Natural killer cell (primary cell): ENCODE measurements at regions of chr3 and their contacts with region 1.

Region 1: GRCh38 chr3:101724329-101725193 is at the start of gene CEP97:
- DNase-seq: peak; percentile 79 to 91
- ATAC-seq: peak; percentile 96 to 100 (median 97)
- H3K4me3 ChIP-seq: peak within 1 kb of the TSS; percentile 82
- H3K4me3 Mint-ChIP-seq: peak within 1 kb of the TSS; percentile 98
- H3K27ac ChIP-seq: peak within 1 kb of the TSS; percentile 54
- H3K27ac Mint-ChIP-seq: peak within 1 kb of the TSS; percentile 90 to 95
- H3K4me1 ChIP-seq: peaks cover 12% of the 10 kb centered on the region
- H3K4me1 Mint-ChIP-seq: peaks cover 17 to 25% of the 10 kb centered on the region in 2 donors
- H3K27me3 ChIP-seq: no peaks in the 10 kb centered on the region
- H3K27me3 Mint-ChIP-seq: no peaks in the 10 kb centered on the region
- CTCF ChIP-seq: no peak
- total RNA-seq, gene CEP97: 8.5 to 11.0 (median 9.4) TPM

Region 2: GRCh38 chr3:101685870-101686412 is 38.6 kb before region 1 on chr3:
- intact Hi-C with region 1: loop called (anchors 2 kb)
- DNase-seq: peak in 1 of 2 donors; percentile 29
- ATAC-seq: peak in 1 of 3 donors; percentile 10
- H3K4me3 ChIP-seq: peak overlapping the region; percentile 75
- H3K4me3 Mint-ChIP-seq: peak overlapping the region; percentile 96
- H3K27ac ChIP-seq: peak overlapping the region; percentile 90
- H3K27ac Mint-ChIP-seq: peak overlapping the region; percentile 98
- H3K4me1 ChIP-seq: peaks cover 27% of the 10 kb centered on the region
- H3K4me1 Mint-ChIP-seq: peaks cover 22 to 34% of the 10 kb centered on the region in 2 donors
- H3K27me3 ChIP-seq: no peaks in the 10 kb centered on the region
- H3K27me3 Mint-ChIP-seq: no peaks in the 10 kb centered on the region
- CTCF ChIP-seq: no peak

Region 3: DNA sequence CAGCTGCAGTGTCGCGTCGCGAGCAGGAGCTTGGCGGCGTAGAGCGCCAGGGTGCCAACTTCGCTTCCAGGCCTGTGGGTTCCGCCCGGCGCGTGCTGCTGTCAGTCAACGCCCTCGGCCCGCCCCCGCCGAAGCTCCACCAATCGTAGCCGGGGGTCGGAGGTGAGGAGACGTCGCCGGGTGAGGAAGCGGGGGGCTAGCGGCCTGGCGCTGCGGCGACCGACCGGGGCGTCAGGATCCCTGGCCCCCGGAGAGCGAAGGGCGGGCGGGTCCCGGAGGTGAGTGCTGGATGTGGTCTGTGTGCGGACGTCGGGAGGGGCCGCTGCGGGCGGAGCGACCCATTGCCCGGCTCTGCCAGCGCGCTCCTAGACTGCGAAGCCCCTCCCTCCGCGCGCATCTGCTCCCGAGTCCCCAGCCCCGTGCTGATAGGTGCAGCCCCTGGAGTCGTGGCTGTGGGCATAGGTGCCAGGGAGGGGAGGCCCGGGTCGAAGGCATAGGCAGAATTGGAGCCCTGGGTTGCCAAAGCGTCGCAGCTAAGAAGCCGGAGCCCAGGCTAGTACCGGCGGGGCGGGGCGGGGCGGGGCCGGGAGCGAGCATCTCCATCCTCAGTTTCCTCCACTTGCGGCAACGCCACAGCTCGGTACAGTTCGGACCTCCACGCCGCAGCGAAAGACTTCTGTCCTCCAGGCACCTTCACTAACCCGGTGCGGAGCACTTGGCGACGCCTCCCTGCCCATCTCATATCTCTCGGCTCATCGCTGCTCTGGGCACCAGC is 54.7 kb after region 1 on chr3 and contains the start of gene NXPE3:
- intact Hi-C with region 1: loop called (anchors 1 kb)
- DNase-seq: peak; percentile 94 to 95
- ATAC-seq: peak; percentile 93 to 97 (median 94)
- H3K4me3 ChIP-seq: peak within 1 kb of the TSS; percentile 82
- H3K4me3 Mint-ChIP-seq: peak within 1 kb of the TSS; percentile 95
- H3K27ac ChIP-seq: peak within 1 kb of the TSS; percentile 95
- H3K27ac Mint-ChIP-seq: peak within 1 kb of the TSS; percentile 91 to 97
- H3K4me1 ChIP-seq: peaks cover 16% of the 10 kb centered on the region
- H3K4me1 Mint-ChIP-seq: peaks cover 24 to 34% of the 10 kb centered on the region in 2 donors
- H3K27me3 ChIP-seq: no peaks in the 10 kb centered on the region
- H3K27me3 Mint-ChIP-seq: no peaks in the 10 kb centered on the region
- CTCF ChIP-seq: no peak
- total RNA-seq, gene NXPE3: 17.0 to 27.1 (median 21.1) TPM